Activated CD8-positive, alpha-beta T cell treated with anti-CD3 and anti-CD28 coated beads for 36 hours (primary cell): ENCODE measurements at regions of chr1 and their contacts with region 1.

Region 1: GRCh38 chr1:172002725-172003345 is 161.5 kb downstream of the DNM3 start:
- DNase-seq: peak; percentile 42
- ATAC-seq: no peak
- H3K4me3 Mint-ChIP-seq: no peak overlapping the region
- H3K27ac Mint-ChIP-seq: no peak overlapping the region
- H3K4me1 Mint-ChIP-seq: no peaks in the 10 kb centered on the region
- H3K27me3 Mint-ChIP-seq: peaks cover under 1% of the 10 kb centered on the region
- CTCF ChIP-seq: peak; percentile 73

Region 2: DNA sequence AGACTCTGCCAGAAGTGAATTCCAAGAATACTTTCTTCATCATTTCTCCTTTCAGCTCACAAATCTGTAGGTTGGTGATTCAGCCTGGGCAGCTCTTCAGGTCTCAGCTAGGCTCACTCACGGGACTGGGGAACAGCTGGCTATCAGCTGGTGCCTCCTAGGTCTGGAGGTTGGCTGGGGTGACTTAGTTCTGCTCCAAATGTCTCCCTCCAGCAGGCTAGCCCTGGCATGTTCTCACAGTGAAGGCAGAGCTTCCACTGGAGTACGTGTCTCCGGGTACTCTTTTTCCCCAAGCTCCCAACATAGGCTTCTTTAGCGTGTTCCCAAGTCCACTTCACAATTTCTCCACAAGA is 248.5 kb before region 1 on chr1:
- CTCF ChIA-PET with region 1: no interaction called
- POLR2A ChIA-PET with region 1: no interaction called
- intact Hi-C with region 1: no loop called
- DNase-seq: no peak
- ATAC-seq: no peak
- H3K4me3 Mint-ChIP-seq: no peak overlapping the region
- H3K27ac Mint-ChIP-seq: no peak overlapping the region
- H3K4me1 Mint-ChIP-seq: peaks cover 6% of the 10 kb centered on the region
- H3K27me3 Mint-ChIP-seq: peaks cover 3% of the 10 kb centered on the region
- CTCF ChIP-seq: no peak

Region 3: DNA sequence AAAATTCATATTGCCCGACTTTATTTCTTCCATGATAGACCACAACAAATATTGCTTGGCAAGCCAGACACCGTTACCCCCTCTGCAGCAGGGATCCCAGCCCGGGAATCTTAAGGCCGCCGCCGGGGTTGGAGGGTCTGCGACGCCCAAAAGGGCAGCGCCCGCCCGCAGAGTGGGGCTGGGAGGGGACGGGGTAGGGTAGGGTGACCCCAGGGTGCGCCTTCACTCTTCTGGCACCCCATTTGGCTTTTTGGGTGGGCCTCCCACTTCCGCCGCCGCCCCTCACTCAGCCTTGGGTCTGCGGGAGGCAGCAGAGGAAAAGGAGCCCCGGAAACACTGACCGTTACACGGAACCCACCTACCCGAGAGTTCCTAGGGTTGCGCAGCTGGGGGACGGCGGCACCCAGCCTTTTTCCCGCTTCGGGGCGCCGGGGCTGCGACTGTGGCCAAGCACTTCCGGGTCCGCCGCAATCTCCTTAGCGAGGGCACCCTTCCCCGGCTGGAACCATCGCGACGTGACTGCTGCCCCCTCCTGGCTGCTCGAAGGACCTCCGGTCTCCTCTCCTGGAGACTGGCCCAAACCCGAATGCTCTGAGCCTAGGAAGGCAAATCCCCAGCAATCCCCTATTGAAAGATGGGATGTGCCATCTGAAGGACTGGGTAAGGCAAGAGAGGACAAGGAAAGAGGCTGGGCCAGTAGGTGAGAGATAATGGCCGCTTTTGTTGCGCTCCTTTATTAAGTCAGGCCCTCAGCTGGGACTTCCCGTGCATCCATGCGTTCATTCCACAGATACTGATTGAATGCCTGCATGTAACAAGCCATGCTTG is 441.0 kb after region 1 on chr1 and contains the start of gene PIGC:
- CTCF ChIA-PET with region 1: interaction called, 20 read pairs
- POLR2A ChIA-PET with region 1: no interaction called
- intact Hi-C with region 1: loop called (anchors 5 kb)
- DNase-seq: peak; percentile 94
- ATAC-seq: peak; percentile 99
- H3K4me3 Mint-ChIP-seq: peak within 1 kb of the TSS; percentile 87
- H3K27ac Mint-ChIP-seq: peak within 1 kb of the TSS; percentile 92
- H3K4me1 Mint-ChIP-seq: peaks cover 35% of the 10 kb centered on the region
- H3K27me3 Mint-ChIP-seq: no peaks in the 10 kb centered on the region
- CTCF ChIP-seq: peak; percentile 85
- total RNA-seq, gene PIGC: 17.8 to 19.5 TPM